ENCODE measurements at regions of chr11 and their contacts with region 1.

Region 1: DNA sequence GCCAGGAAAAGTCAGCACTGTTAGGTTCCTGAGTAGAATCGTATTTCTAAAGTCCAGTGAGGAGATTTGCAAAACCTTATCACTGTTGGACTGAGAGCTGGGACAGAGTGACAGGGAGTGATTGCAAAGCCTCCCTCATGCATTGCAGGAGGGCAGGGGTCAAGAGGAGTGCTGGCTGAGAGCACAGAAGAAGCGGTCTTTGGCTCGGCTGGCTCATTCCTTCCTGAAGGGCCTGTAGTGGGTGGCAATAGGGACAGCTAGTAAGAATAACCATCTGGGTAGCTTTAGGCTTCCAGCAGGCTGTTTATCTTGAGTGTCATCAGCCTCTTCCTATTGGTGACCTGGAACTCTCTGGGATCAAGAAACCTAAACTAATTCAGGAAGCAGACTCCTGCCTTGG is 53.4 kb downstream of the CD44 start:
- DNase-seq: no peak
- H3K4me3 ChIP-seq: no peak overlapping the region
- H3K27ac ChIP-seq: peak overlapping the region; percentile 41
- H3K27me3 ChIP-seq: no peaks in the 10 kb centered on the region
- CTCF ChIP-seq: 0 out of 2 replicates have a peak, but pooled peaks have one; percentile 2

Region 2: GRCh38 chr11:34840736-34841386 is 351.5 kb before region 1 on chr11:
- CTCF ChIA-PET with region 1: no interaction called
- POLR2A ChIA-PET with region 1: no interaction called
- DNase-seq: no peak
- H3K4me3 ChIP-seq: no peak overlapping the region
- H3K27ac ChIP-seq: no peak overlapping the region
- H3K27me3 ChIP-seq: no peaks in the 10 kb centered on the region
- CTCF ChIP-seq: peak; percentile 47

Region 3: DNA sequence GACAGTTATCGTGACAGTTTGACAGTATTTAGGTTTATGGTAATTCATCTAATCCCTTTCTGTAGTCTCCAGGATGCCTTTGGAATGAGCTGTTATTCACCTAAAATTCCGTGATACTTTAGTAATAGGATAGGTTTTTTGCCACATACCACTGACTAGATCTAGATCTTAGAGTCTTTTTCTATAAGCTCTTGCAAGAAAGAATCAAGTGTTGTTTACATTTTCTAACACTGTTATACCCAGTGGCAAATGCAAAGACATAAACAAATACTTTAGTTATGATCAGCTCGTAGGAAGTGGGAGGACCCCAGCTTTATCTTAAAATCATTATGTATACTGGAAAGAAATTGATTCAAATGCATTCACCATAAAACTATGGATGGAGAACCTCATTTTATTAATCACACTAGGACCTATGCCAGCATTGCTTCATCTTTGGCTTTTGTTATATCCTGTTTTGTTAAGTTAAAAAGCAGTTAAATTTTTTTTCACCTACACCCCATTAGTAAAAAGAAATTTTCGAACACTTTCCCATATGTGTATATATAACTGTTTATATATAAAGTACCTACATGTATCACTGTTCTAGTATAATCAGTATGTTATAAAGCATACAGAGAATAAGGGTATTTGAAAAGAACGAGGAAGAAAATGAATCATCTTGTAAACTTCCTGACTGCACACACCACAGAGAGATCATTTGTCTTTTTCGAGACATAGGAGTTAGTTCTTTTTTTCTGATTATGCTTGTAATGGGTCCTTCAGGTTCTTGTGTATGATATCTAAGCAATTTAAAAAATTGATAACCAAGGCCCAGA is 215.0 kb before region 1 on chr11:
- CTCF ChIA-PET with region 1: no interaction called
- POLR2A ChIA-PET with region 1: interaction called, 15 read pairs
- DNase-seq: peak; percentile 90
- H3K4me3 ChIP-seq: no peak overlapping the region
- H3K27ac ChIP-seq: no peak overlapping the region
- H3K27me3 ChIP-seq: no peaks in the 10 kb centered on the region
- CTCF ChIP-seq: no peak

Region 4: GRCh38 chr11:35082321-35083182 is 109.8 kb before region 1 on chr11:
- CTCF ChIA-PET with region 1: no interaction called
- POLR2A ChIA-PET with region 1: no interaction called
- DNase-seq: no peak
- H3K4me3 ChIP-seq: no peak overlapping the region; the same call in 1 of the 2 replicates
- H3K27ac ChIP-seq: peak overlapping the region; percentile 83
- H3K27me3 ChIP-seq: no peaks in the 10 kb centered on the region
- CTCF ChIP-seq: no peak

Region 5: DNA sequence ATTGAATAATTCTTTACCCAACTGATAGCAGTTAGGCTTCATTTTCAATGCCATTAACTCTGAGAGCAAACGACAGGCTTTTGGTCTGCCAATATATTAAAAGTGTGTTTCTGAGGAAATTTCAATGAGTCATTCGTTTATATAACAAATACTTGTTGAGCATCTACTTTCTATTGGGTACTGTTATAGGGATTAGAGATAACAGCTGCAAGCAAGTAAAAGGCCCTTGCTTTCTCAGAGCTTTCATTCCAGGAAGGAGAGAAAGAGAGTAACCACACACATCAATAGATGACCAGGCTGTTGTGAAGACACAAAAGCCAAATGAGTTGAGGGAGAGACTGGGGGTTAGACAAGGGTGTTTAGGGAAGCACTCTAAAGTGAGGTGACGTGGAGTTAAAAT is 17.7 kb before region 1 on chr11:
- CTCF ChIA-PET with region 1: no interaction called
- POLR2A ChIA-PET with region 1: interaction called, 19 read pairs
- DNase-seq: peak; percentile 60
- H3K4me3 ChIP-seq: no peak overlapping the region
- H3K27ac ChIP-seq: peak overlapping the region; percentile 82
- H3K27me3 ChIP-seq: no peaks in the 10 kb centered on the region
- CTCF ChIP-seq: no peak

Measured in AG04450 (cell line).